Panc1 (cell line): ENCODE measurements at regions of chr16 and their contacts with region 1.

Region 1: DNA sequence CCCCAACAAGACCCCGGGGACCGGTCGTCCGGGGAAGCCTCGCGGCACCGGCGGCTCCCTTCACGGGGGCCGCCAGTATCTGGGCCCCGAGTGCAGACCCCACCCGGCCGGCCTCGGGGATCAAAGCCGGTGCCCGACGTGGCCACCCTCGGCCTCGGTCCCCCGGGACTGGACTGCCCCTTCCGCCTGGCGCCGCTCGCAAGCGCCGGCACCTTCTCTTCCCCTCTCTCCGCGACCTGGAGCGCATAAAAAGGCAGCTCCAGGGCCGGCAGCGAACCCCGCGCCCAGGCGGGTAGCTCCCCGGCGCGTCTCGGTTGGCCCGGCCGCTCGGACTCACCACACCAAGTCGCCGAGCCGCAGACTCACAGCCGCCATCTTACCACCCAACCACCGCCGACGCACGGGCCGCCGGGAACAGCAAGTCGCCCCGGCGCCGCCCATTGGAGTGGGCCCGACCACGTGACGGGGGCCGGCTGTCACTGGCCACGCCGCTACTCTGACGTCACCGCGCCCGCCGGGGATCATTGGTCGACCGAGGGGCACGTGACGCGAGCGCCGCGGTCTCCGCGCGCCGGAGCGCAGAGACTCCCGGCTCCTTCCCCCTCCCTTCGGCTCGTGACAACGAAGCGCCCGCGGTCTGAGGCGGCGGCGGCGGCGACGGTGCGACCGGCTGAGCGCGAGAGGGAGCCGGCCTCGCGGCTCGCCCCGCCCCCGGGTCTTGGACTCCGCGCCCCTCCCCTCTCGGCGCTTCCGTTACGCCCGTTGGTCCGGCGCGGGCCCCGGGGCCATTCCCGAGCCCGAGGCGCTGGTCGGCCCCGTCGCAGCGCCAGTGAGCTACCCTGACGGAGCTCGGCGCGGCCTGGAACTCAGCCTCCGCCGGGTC is at the starts of genes GLYR1 and UBN1:
- DNase-seq: peak; percentile 71
- ATAC-seq: peak; percentile 95
- H3K4me3 ChIP-seq: peak within 1 kb of the TSS; percentile 63 to 96
- H3K27ac ChIP-seq: peak within 1 kb of the TSS; percentile 84
- H3K4me1 ChIP-seq: peaks cover 22% of the 10 kb centered on the region
- H3K27me3 ChIP-seq: no peaks in the 10 kb centered on the region
- CTCF ChIP-seq: no peak
- total RNA-seq, gene GLYR1: 111 TPM
- total RNA-seq, gene UBN1: 63.1 TPM

Region 2: DNA sequence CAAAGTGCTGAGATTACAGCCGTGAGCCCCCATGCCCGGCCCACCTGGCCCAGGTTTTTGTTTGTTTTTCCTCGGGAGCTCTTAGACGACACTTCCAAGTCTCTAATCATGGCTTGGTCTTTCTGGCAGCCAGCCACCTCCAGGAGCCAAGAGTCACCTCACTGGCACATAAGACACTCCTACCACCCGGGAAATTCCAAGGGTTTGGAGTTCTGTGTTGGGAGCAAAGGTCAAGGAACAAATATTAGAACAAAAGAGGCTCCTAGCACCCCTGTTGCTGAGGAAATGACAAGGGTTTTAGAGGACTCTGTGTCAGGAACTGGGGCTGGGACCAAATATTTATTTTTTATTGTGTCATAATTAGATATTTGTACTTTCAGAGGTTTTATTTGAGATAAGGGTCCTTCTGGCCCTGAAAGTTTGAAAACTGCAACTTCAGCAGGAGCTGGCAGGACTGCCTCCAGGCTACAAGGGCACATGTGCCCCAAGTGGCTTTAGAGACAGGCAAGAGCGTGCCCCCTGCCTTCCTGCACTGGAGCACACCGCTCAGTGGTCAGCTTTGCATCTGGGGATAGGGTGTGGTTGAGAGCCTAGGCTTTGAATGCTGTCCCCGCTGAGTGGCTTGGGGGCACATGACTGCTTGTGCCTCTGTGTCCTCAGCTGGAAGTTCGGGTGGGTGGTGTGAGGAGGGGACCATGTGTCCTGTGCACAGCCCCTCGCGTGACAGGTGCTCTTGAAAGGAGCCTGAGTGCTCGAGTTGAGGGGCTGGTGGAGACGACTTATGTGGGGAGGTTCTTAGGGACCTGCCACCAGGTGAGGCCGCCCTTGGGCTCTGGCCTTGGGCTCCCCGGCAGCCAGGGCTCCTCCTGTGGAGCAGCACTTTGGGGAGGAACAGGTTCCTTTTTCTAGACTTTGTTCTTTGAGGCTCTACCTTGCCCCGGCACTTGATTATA is 192.8 kb before region 1 on chr16:
- CTCF ChIA-PET with region 1: no interaction called
- POLR2A ChIA-PET with region 1: no interaction called
- in situ Hi-C with region 1: no loop called
- intact Hi-C with region 1: no loop called
- DNase-seq: no peak
- ATAC-seq: no peak
- H3K4me3 ChIP-seq: no peak overlapping the region
- H3K27ac ChIP-seq: no peak overlapping the region
- H3K4me1 ChIP-seq: no peaks in the 10 kb centered on the region
- H3K27me3 ChIP-seq: no peaks in the 10 kb centered on the region
- CTCF ChIP-seq: no peak

Region 3: DNA sequence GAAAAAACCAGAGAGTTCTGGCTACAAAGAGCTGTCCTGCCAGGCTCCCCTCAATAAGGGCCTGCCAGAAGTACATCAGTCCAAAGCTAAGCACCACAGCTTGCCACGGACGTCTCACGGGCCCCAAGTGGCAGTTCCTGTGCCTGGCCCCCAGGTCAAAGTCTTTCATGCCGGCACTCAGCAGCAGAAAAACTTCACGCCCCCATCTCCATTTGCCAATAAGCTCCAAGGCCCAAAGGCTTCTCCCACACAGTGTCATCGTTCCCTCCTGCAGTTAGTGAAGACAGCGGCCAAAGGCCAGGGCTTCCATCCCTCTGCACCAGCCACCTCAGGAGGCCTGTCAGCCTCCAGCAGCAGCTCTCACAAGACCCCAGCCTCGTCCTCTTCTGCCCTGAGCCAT is 27.5 kb after region 1 on chr16:
- CTCF ChIA-PET with region 1: no interaction called
- POLR2A ChIA-PET with region 1: no interaction called
- in situ Hi-C with region 1: no loop called
- intact Hi-C with region 1: no loop called
- DNase-seq: no peak
- ATAC-seq: no peak
- H3K4me3 ChIP-seq: no peak overlapping the region
- H3K27ac ChIP-seq: no peak overlapping the region
- H3K4me1 ChIP-seq: no peaks in the 10 kb centered on the region
- H3K27me3 ChIP-seq: no peaks in the 10 kb centered on the region
- CTCF ChIP-seq: no peak

Region 4: GRCh38 chr16:5175266-5175665 is 328.1 kb after region 1 on chr16:
- CTCF ChIA-PET with region 1: no interaction called
- POLR2A ChIA-PET with region 1: interaction called, 13 read pairs
- in situ Hi-C with region 1: no loop called
- intact Hi-C with region 1: no loop called
- DNase-seq: no peak
- ATAC-seq: no peak
- H3K4me3 ChIP-seq: no peak overlapping the region
- H3K27ac ChIP-seq: no peak overlapping the region
- H3K4me1 ChIP-seq: no peaks in the 10 kb centered on the region
- H3K27me3 ChIP-seq: no peaks in the 10 kb centered on the region
- CTCF ChIP-seq: no peak